MCF 10A (cell line): ENCODE measurements at regions of chr6 and their contacts with region 1.

Region 1: DNA sequence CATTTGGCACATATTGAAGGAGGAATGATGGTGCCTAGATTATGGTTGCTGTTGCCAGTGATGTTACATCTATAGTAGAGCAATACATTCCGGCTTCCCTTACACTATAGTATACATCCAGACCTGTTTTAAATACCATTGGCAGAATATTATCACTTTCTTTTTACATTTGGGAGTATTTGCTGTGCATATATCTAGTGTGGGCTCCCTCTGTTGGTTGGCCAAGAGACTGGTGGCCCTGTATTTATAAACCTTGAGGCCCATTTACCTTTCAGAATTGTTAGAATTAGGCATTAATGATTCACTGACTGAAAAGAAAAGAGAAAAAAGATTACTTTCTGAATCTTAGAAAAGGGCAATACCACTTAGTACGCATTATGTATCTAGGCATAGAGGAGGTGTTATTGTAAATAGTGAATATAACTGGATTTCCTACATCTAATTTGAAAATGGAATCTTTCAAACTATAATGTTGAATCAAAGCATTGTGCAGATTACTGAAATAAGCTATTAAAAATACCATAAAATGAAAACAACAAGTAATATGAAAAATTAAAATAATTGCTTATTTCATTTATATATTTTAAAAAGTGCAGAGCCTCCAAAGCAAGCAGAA is 628.8 kb upstream of the MAN1A1 start:
- DNase-seq: peak; percentile 33
- H3K4me3 Mint-ChIP-seq: no peak overlapping the region
- H3K27ac Mint-ChIP-seq: no peak overlapping the region
- H3K4me1 Mint-ChIP-seq: no peaks in the 10 kb centered on the region
- H3K27me3 Mint-ChIP-seq: no peaks in the 10 kb centered on the region
- CTCF ChIP-seq: peak; percentile 50

Region 2: DNA sequence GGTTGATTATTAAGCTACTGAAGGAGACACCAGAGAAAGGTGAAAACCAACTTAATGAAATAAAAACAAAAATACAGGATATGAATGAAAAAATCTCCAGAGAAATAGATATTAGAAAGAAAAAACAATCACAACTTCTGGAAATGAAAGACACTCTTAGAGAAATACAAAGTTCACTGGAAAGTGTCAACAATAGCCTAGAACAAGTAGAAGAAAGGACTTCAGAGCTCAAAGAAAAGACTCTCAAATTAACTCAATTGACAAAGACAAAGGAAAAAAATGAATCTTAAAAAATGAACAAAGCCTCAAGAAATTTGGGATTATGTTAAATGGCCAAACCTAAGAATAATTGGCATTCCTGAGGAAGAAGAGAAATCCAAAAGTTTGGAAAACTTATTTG is 1033.2 kb before region 1 on chr6:
- CTCF ChIA-PET with region 1: no interaction called
- POLR2A ChIA-PET with region 1: no interaction called
- intact Hi-C with region 1: no loop called
- DNase-seq: no peak
- H3K4me3 Mint-ChIP-seq: no peak overlapping the region
- H3K27ac Mint-ChIP-seq: no peak overlapping the region
- H3K4me1 Mint-ChIP-seq: no peaks in the 10 kb centered on the region
- H3K27me3 Mint-ChIP-seq: no peaks in the 10 kb centered on the region
- CTCF ChIP-seq: no peak

Region 3: DNA sequence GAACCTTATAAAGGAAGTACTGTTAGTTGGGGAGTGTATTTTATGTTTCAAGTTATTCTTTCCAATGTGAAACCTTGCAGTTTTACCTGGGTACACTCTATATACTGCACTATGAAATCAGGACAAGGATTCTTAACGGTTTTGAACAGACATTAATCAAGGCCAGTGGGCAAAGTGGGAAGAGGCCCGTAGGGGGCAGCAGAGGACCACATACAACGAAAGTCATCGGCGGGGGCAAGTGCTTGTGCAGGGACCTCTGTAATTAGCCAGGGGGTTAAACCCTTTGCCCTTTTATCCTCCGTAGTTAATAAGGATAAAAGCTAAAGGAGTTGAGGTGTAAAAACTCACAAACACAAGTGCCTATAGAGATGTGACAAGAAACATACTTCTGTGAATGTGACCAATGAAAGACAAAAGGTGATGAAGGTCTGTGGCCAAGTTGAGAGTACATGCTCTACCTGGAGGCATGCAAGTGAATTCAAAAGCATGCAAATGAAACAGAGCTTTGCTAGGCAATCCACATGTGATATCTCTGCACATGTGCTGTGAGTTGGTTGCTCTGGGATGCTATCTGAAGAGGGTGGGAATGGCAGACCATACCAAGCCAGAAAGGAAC is 236.1 kb before region 1 on chr6:
- CTCF ChIA-PET with region 1: interaction called, 41 read pairs
- POLR2A ChIA-PET with region 1: no interaction called
- intact Hi-C with region 1: loop called (anchors 1 kb)
- DNase-seq: peak; percentile 63
- H3K4me3 Mint-ChIP-seq: no peak overlapping the region
- H3K27ac Mint-ChIP-seq: no peak overlapping the region
- H3K4me1 Mint-ChIP-seq: no peaks in the 10 kb centered on the region
- H3K27me3 Mint-ChIP-seq: no peaks in the 10 kb centered on the region
- CTCF ChIP-seq: peak; percentile 80

Region 4: GRCh38 chr6:119757467-119757866 is 220.9 kb before region 1 on chr6:
- CTCF ChIA-PET with region 1: interaction called, 10 read pairs
- POLR2A ChIA-PET with region 1: no interaction called
- intact Hi-C with region 1: no loop called
- DNase-seq: peak; percentile 45
- H3K4me3 Mint-ChIP-seq: no peak overlapping the region
- H3K27ac Mint-ChIP-seq: no peak overlapping the region
- H3K4me1 Mint-ChIP-seq: peaks cover 6% of the 10 kb centered on the region
- H3K27me3 Mint-ChIP-seq: no peaks in the 10 kb centered on the region
- CTCF ChIP-seq: no peak

Region 5: GRCh38 chr6:119966486-119966885 is 11.9 kb before region 1 on chr6:
- CTCF ChIA-PET with region 1: interaction called, 13 read pairs
- POLR2A ChIA-PET with region 1: interaction called, 3 read pairs
- intact Hi-C with region 1: no loop called
- DNase-seq: peak; percentile 11
- H3K4me3 Mint-ChIP-seq: no peak overlapping the region
- H3K27ac Mint-ChIP-seq: no peak overlapping the region
- H3K4me1 Mint-ChIP-seq: no peaks in the 10 kb centered on the region
- H3K27me3 Mint-ChIP-seq: no peaks in the 10 kb centered on the region
- CTCF ChIP-seq: no peak

Region 6: GRCh38 chr6:120077489-120077888 is 99.1 kb after region 1 on chr6:
- CTCF ChIA-PET with region 1: interaction called, 20 read pairs
- POLR2A ChIA-PET with region 1: no interaction called
- intact Hi-C with region 1: no loop called
- DNase-seq: peak; percentile 55
- H3K4me3 Mint-ChIP-seq: no peak overlapping the region
- H3K27ac Mint-ChIP-seq: no peak overlapping the region
- H3K4me1 Mint-ChIP-seq: peaks cover 5% of the 10 kb centered on the region
- H3K27me3 Mint-ChIP-seq: no peaks in the 10 kb centered on the region
- CTCF ChIP-seq: peak; percentile 30

Region 7: GRCh38 chr6:120378582-120379220 is 400.3 kb after region 1 on chr6:
- CTCF ChIA-PET with region 1: no interaction called
- POLR2A ChIA-PET with region 1: no interaction called
- intact Hi-C with region 1: loop called (anchors 5 kb)
- DNase-seq: peak; percentile 61
- H3K4me3 Mint-ChIP-seq: no peak overlapping the region
- H3K27ac Mint-ChIP-seq: no peak overlapping the region
- H3K4me1 Mint-ChIP-seq: no peaks in the 10 kb centered on the region
- H3K27me3 Mint-ChIP-seq: peaks cover 1% of the 10 kb centered on the region
- CTCF ChIP-seq: peak; percentile 50

Region 8: DNA sequence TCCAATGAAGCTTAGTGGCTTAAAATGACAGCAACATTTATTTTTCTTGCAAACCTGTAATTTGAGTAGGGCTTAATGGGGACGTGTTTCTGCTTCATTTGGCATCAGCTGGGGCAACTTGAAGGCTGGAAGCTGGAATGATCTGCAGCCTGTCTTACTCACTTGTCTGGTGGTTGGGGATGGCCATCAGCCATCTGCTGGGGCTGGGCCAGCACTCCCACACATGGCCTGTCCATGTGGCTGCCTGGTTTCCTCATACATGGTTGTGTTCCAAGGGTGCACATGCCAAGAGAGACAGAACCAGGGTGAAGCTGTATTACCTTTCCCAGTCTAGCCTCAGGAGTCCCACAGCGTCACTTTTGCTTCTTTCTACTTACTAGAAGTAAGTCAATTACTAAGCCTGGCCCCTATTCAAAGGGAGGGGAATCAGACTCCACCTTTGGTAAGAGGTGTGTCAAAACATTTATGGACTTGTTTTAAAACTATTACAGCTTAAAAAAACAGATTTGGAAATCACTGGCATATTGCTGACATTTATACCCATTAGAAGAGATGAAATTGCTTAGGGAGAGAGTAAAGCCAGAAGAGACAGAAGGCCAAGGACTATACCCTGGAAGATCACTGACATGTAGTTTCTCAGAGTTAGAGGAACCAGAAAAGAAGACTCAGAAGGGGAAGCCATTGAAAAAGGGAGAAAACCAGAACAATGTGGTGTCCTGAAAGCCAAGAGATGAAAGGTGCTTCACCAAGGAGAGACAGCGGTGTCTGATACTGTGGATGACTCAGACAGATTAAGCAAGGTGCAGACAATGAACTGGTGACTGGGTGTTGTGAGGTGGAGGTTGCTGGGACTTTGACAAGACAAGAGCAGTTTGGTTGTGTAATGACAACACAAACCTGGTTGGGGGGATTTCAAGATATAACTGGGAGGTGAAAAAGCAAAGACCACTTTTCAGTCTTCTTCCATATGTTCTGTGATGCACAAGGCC is 1802.2 kb after region 1 on chr6:
- CTCF ChIA-PET with region 1: no interaction called
- POLR2A ChIA-PET with region 1: no interaction called
- intact Hi-C with region 1: no loop called
- DNase-seq: peak; percentile 98
- H3K4me3 Mint-ChIP-seq: no peak overlapping the region
- H3K27ac Mint-ChIP-seq: no peak overlapping the region
- H3K4me1 Mint-ChIP-seq: no peaks in the 10 kb centered on the region
- H3K27me3 Mint-ChIP-seq: no peaks in the 10 kb centered on the region
- CTCF ChIP-seq: no peak